B cell (primary cell): ENCODE measurements at regions of chr1 and their contacts with region 1.

Region 1: DNA sequence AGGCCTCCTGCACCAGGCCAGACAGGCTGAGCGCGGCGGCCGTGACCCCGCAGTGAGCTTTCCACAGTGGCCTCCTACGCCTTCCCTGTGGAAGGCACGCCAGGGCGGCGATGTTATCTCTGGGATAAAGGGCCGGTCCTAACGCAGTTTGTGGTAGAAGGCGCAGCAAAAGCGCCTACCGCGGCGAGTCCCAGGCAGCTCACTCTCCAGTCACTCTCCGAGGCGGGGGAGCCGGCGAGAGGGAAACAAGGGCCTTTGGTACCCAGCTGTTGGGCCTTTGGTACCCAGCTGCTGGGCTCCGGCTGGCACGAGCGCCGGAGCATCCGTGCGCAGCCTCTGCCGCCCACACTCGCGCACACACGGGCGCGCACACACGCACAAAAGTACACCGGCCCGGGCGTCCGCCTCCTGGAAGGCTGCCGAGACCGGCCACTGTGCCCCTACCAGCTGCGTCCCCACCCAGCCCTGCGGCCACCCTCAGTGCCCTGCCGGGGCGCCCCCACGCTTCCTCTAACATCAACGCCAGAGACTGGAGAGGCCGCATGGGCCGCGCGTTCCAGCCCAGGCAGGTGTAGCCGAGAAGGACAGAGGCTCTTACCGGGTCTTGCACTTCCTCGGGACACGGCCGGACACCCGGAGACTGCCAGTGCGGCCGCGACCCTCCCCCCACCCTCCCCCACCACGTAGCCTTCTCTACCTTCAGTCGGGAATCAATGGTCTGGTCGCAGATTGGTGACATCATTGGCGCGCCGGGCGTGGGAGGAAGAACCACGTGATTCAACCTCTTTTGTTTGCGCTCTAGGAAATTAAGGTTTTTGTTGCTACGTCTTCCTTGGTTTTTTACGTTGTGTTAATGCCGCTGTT is 19.5 kb upstream of the ADAR start:
- DNase-seq: peak; percentile 93
- ATAC-seq: peak; percentile 77
- H3K4me3 ChIP-seq: peak overlapping the region; percentile 66 to 94 (median 88)
- H3K4me3 Mint-ChIP-seq: peak overlapping the region; percentile 94
- H3K27ac ChIP-seq: peak overlapping the region; percentile 94 to 98
- H3K27ac Mint-ChIP-seq: peak overlapping the region; percentile 99
- H3K4me1 ChIP-seq: peaks cover 8 to 12% of the 10 kb centered on the region in 2 donors
- H3K4me1 Mint-ChIP-seq: peaks cover 35% of the 10 kb centered on the region
- H3K27me3 ChIP-seq: peaks cover 0 to 3% (median 0%) of the 10 kb centered on the region in 4 experiments
- H3K27me3 Mint-ChIP-seq: peaks cover 6% of the 10 kb centered on the region
- CTCF ChIP-seq: no peak

Region 2: GRCh38 chr1:154607609-154608396 is 19.7 kb before region 1 on chr1 and contains the start of gene ADAR:
- CTCF ChIA-PET with region 1: interaction called, 3 read pairs
- POLR2A ChIA-PET with region 1: interaction called, 5 read pairs
- intact Hi-C with region 1: loop called (anchors 1 kb)
- DNase-seq: peak; percentile 96
- ATAC-seq: peak; percentile 92
- H3K4me3 ChIP-seq: peak within 1 kb of the TSS; percentile 83 to 96 (median 93)
- H3K4me3 Mint-ChIP-seq: peak within 1 kb of the TSS; percentile 98
- H3K27ac ChIP-seq: peak within 1 kb of the TSS; percentile 86 to 97
- H3K27ac Mint-ChIP-seq: peak within 1 kb of the TSS; percentile 96
- H3K4me1 ChIP-seq: peaks cover 50 to 60% of the 10 kb centered on the region in 2 donors
- H3K4me1 Mint-ChIP-seq: peaks cover 61% of the 10 kb centered on the region
- H3K27me3 ChIP-seq: no peaks in the 10 kb centered on the region
- H3K27me3 Mint-ChIP-seq: no peaks in the 10 kb centered on the region
- CTCF ChIP-seq: no peak
- total RNA-seq, gene ADAR: 221 and 241 TPM in 2 replicates